CD14-positive monocyte (primary cell): ENCODE measurements at regions of chr20 and their contacts with region 1.

Region 1: DNA sequence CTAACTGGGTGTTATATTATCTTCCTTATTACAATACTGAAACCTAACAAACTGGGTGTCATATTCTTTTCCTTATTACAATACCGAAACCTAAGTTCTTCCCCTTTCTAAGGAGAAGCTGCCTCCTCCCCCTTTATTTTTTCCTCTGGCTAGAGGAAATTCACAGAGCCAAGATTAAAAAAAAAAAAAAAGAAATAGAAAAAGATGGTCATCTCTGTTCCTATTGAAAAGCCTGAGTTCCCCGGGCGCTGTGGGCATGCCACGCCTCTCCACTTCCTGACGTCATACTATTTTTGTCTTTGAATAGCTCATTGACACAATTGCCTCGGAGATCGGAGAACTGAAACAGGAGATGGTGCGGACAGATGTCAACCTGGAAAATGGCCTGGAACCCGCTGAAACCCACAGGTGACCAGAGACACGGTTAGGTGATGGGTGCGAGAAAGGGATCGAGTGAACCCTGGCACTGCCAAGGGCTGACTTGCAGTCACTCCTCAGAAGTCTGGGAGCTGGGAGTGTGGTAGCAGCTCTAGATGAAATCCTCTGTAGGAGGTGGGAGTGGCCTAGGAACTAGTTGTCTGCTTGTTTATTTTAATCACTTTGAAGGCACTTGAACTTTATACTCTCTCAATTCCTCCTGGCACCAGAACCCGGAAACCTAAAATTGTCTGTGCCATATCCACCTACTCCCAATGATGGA is 82.2 kb upstream of the NAA20 start:
- DNase-seq: peak; percentile 93 to 96 (median 94)
- H3K4me3 ChIP-seq: peak overlapping the region; percentile 51 to 98 (median 83)
- H3K4me3 Mint-ChIP-seq: peak overlapping the region; percentile 82 to 91
- H3K27ac ChIP-seq: peak overlapping the region; percentile 97 to 98
- H3K27ac Mint-ChIP-seq: peak overlapping the region; percentile 95 to 100 (median 98)
- H3K4me1 ChIP-seq: peaks cover 83 to 89% of the 10 kb centered on the region in 2 donors
- H3K4me1 Mint-ChIP-seq: peaks cover 90% of the 10 kb centered on the region
- H3K27me3 ChIP-seq: no peaks in the 10 kb centered on the region
- H3K27me3 Mint-ChIP-seq: peaks cover 0 to 2% (median 1%) of the 10 kb centered on the region in 3 donors
- CTCF ChIP-seq: no peak

Region 2: GRCh38 chr20:18857640-18858039 is 1077.3 kb before region 1 on chr20:
- intact Hi-C with region 1: no loop called
- DNase-seq: no peak
- H3K4me3 ChIP-seq: no peak overlapping the region
- H3K4me3 Mint-ChIP-seq: no peak overlapping the region
- H3K27ac ChIP-seq: no peak overlapping the region
- H3K27ac Mint-ChIP-seq: no peak overlapping the region
- H3K4me1 ChIP-seq: no peaks in the 10 kb centered on the region
- H3K4me1 Mint-ChIP-seq: peaks cover 9% of the 10 kb centered on the region
- H3K27me3 ChIP-seq: no peaks in the 10 kb centered on the region
- H3K27me3 Mint-ChIP-seq: no peaks in the 10 kb centered on the region
- CTCF ChIP-seq: no peak

Region 3: GRCh38 chr20:19867940-19868371 is 67.0 kb before region 1 on chr20:
- intact Hi-C with region 1: loop called in 1 of 2 experiments (anchors 5 kb)
- DNase-seq: peak; percentile 80 to 96 (median 91)
- H3K4me3 ChIP-seq: peak overlapping the region in 1 of 3 experiments; percentile 23
- H3K4me3 Mint-ChIP-seq: peak overlapping the region; percentile 29 to 62
- H3K27ac ChIP-seq: peak overlapping the region; percentile 83 to 90
- H3K27ac Mint-ChIP-seq: peak overlapping the region; percentile 89 to 99 (median 98)
- H3K4me1 ChIP-seq: peaks cover 29% of the 10 kb centered on the region in 2 donors
- H3K4me1 Mint-ChIP-seq: peaks cover 29% of the 10 kb centered on the region
- H3K27me3 ChIP-seq: no peaks in the 10 kb centered on the region
- H3K27me3 Mint-ChIP-seq: peaks cover 0 to 5% (median 0%) of the 10 kb centered on the region in 3 donors
- CTCF ChIP-seq: no peak

Region 4: GRCh38 chr20:19889011-19889953 is 45.7 kb before region 1 on chr20:
- intact Hi-C with region 1: loop called in 1 of 2 experiments (anchors 10 kb)
- DNase-seq: no peak
- H3K4me3 ChIP-seq: peak overlapping the region in 1 of 3 experiments; percentile 21
- H3K4me3 Mint-ChIP-seq: peak overlapping the region; percentile 16 to 68
- H3K27ac ChIP-seq: no peak overlapping the region
- H3K27ac Mint-ChIP-seq: peak overlapping the region in 3 of 7 donors; percentile 6 to 61 (median 27)
- H3K4me1 ChIP-seq: peaks cover 26 to 31% of the 10 kb centered on the region in 2 donors
- H3K4me1 Mint-ChIP-seq: peaks cover 41% of the 10 kb centered on the region
- H3K27me3 ChIP-seq: no peaks in the 10 kb centered on the region
- H3K27me3 Mint-ChIP-seq: peaks cover 3 to 7% (median 5%) of the 10 kb centered on the region in 3 donors
- CTCF ChIP-seq: no peak

Region 5: GRCh38 chr20:19903168-19903811 is 31.7 kb before region 1 on chr20:
- intact Hi-C with region 1: loop called (anchors 5 kb)
- DNase-seq: peak; percentile 86 to 92 (median 91)
- H3K4me3 ChIP-seq: peak overlapping the region in 1 of 3 experiments; percentile 51
- H3K4me3 Mint-ChIP-seq: peak overlapping the region; percentile 42 to 57
- H3K27ac ChIP-seq: peak overlapping the region; percentile 74 to 96
- H3K27ac Mint-ChIP-seq: peak overlapping the region; percentile 92 to 97 (median 96)
- H3K4me1 ChIP-seq: peaks cover 53 to 54% of the 10 kb centered on the region in 2 donors
- H3K4me1 Mint-ChIP-seq: peaks cover 52% of the 10 kb centered on the region
- H3K27me3 ChIP-seq: no peaks in the 10 kb centered on the region
- H3K27me3 Mint-ChIP-seq: peaks cover 0 to 2% (median 0%) of the 10 kb centered on the region in 3 donors
- CTCF ChIP-seq: peak; percentile 40

Region 6: GRCh38 chr20:19909725-19910124 is 25.2 kb before region 1 on chr20:
- intact Hi-C with region 1: loop called (anchors 2 to 5 kb)
- DNase-seq: peak in 2 of 3 donors; percentile 57 to 61
- H3K4me3 ChIP-seq: peak overlapping the region in 1 of 3 experiments; percentile 42
- H3K4me3 Mint-ChIP-seq: peak overlapping the region; percentile 34 to 67
- H3K27ac ChIP-seq: peak overlapping the region; percentile 73 to 74
- H3K27ac Mint-ChIP-seq: peak overlapping the region; percentile 81 to 90 (median 88)
- H3K4me1 ChIP-seq: peaks cover 75 to 77% of the 10 kb centered on the region in 2 donors
- H3K4me1 Mint-ChIP-seq: peaks cover 76% of the 10 kb centered on the region
- H3K27me3 ChIP-seq: no peaks in the 10 kb centered on the region
- H3K27me3 Mint-ChIP-seq: peaks cover 0 to 4% (median 4%) of the 10 kb centered on the region in 3 donors
- CTCF ChIP-seq: no peak

Region 7: GRCh38 chr20:19918965-19919329 is 16.0 kb before region 1 on chr20:
- intact Hi-C with region 1: loop called (anchors 2 kb)
- DNase-seq: no peak
- H3K4me3 ChIP-seq: no peak overlapping the region
- H3K4me3 Mint-ChIP-seq: no peak overlapping the region
- H3K27ac ChIP-seq: peak overlapping the region in 1 of 2 donors; percentile 93
- H3K27ac Mint-ChIP-seq: peak overlapping the region in 3 of 7 donors; percentile 91 to 99 (median 98)
- H3K4me1 ChIP-seq: peaks cover 69 to 72% of the 10 kb centered on the region in 2 donors
- H3K4me1 Mint-ChIP-seq: peaks cover 65% of the 10 kb centered on the region
- H3K27me3 ChIP-seq: no peaks in the 10 kb centered on the region
- H3K27me3 Mint-ChIP-seq: peaks cover 1 to 4% (median 1%) of the 10 kb centered on the region in 3 donors
- CTCF ChIP-seq: no peak

Region 8: GRCh38 chr20:19974626-19975435 is 39.9 kb after region 1 on chr20:
- intact Hi-C with region 1: loop called in 1 of 2 experiments (anchors 5 kb)
- DNase-seq: peak; percentile 89 to 94 (median 93)
- H3K4me3 ChIP-seq: peak overlapping the region; percentile 14 to 69 (median 55)
- H3K4me3 Mint-ChIP-seq: peak overlapping the region; percentile 76 to 83
- H3K27ac ChIP-seq: peak overlapping the region; percentile 85 to 89
- H3K27ac Mint-ChIP-seq: peak overlapping the region; percentile 86 to 97 (median 94)
- H3K4me1 ChIP-seq: peaks cover 84 to 93% of the 10 kb centered on the region in 2 donors
- H3K4me1 Mint-ChIP-seq: peaks cover 93% of the 10 kb centered on the region
- H3K27me3 ChIP-seq: no peaks in the 10 kb centered on the region
- H3K27me3 Mint-ChIP-seq: peaks cover 0 to 1% (median under 1%) of the 10 kb centered on the region in 3 donors
- CTCF ChIP-seq: no peak

Region 9: DNA sequence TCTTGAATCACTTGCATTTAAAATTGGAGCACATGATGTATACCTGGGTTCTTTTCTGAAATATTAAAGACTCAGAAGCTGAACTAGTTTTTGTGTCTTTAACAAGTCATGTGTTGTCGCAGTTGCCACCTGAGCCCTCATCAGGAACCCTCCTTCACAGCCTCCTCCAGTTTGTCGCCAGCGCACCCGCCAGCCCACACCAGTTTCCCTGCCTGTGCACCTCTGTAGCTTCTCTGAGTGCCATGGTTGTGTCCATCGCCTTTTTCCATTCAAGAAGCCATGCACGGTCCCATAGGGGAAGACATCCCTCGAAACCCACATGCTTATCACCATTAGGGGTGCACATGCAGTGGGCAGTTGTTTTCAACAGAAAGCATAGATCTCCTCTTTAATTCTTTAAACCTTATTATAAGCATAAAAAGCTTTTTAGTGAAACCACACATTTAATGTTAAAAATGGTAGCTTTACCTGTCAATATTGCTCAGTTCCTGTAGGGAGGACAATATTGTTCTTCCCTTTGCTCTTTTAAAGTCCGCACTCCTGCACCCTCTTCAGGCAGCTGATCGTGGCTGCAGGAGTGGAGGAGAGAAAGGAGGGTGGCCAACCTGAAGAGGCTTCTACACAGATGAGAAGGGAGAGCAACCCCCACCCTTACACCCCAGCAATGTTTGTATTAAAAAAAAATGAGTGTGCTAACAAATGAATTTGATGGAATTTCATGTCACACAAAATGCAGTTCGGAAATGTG is 239.3 kb after region 1 on chr20:
- intact Hi-C with region 1: no loop called
- DNase-seq: no peak
- H3K4me3 ChIP-seq: no peak overlapping the region
- H3K4me3 Mint-ChIP-seq: no peak overlapping the region
- H3K27ac ChIP-seq: no peak overlapping the region
- H3K27ac Mint-ChIP-seq: peak overlapping the region in 1 of 7 donors; percentile 60
- H3K4me1 ChIP-seq: no peaks in the 10 kb centered on the region
- H3K4me1 Mint-ChIP-seq: no peaks in the 10 kb centered on the region
- H3K27me3 ChIP-seq: peaks cover 0 to 2% of the 10 kb centered on the region in 2 donors
- H3K27me3 Mint-ChIP-seq: peaks cover under 1 to 11% (median 9%) of the 10 kb centered on the region in 3 donors
- CTCF ChIP-seq: no peak